Naive thymus-derived CD4-positive, alpha-beta T cell (primary cell): ENCODE measurements at regions of chr10 and their contacts with region 1.

Region 1: GRCh38 chr10:89086801-89087521 is 96.4 kb downstream of the FAS start:
- DNase-seq: no peak
- ATAC-seq: peak; percentile 67
- H3K4me3 ChIP-seq: no peak overlapping the region
- H3K4me3 Mint-ChIP-seq: peak overlapping the region in 1 of 10 donors; percentile 16
- H3K27ac ChIP-seq: no peak overlapping the region
- H3K27ac Mint-ChIP-seq: peak overlapping the region in 1 of 9 donors; percentile 15
- H3K4me1 ChIP-seq: peaks cover 6 to 9% of the 10 kb centered on the region in 2 donors
- H3K4me1 Mint-ChIP-seq: peaks cover 0 to 15% (median 0%) of the 10 kb centered on the region in 7 donors
- H3K27me3 ChIP-seq: no peaks in the 10 kb centered on the region
- H3K27me3 Mint-ChIP-seq: peaks cover 0 to 8% (median 0%) of the 10 kb centered on the region in 5 donors

Region 2: GRCh38 chr10:88582806-88583583 is 504.0 kb before region 1 on chr10 and contains the start of gene RNLS:
- CTCF ChIA-PET with region 1: no interaction called
- POLR2A ChIA-PET with region 1: no interaction called
- intact Hi-C with region 1: loop called in 1 of 2 experiments (anchors 10 kb)
- DNase-seq: peak; percentile 46 to 66 (median 62)
- ATAC-seq: peak; percentile 90
- H3K4me3 ChIP-seq: peak within 1 kb of the TSS; percentile 90
- H3K4me3 Mint-ChIP-seq: peak within 1 kb of the TSS; percentile 88 to 95 (median 90)
- H3K27ac ChIP-seq: peak within 1 kb of the TSS; percentile 80
- H3K27ac Mint-ChIP-seq: peak within 1 kb of the TSS; percentile 84 to 97 (median 91)
- H3K4me1 ChIP-seq: peaks cover 6 to 8% of the 10 kb centered on the region in 2 donors
- H3K4me1 Mint-ChIP-seq: peaks cover 8 to 16% (median 12%) of the 10 kb centered on the region in 7 donors
- H3K27me3 ChIP-seq: no peaks in the 10 kb centered on the region
- H3K27me3 Mint-ChIP-seq: peaks cover 0 to 19% (median 4%) of the 10 kb centered on the region in 5 donors
- total RNA-seq, gene RNLS: 1.5 to 3.6 (median 2.9) TPM

Region 3: GRCh38 chr10:88820748-88821389 is 266.1 kb before region 1 on chr10:
- CTCF ChIA-PET with region 1: no interaction called
- POLR2A ChIA-PET with region 1: no interaction called
- intact Hi-C with region 1: loop called in 1 of 2 experiments (anchors 10 kb)
- DNase-seq: peak in 1 of 9 donors; percentile 13
- ATAC-seq: no peak
- H3K4me3 ChIP-seq: no peak overlapping the region
- H3K4me3 Mint-ChIP-seq: peak overlapping the region in 2 of 10 donors; percentile 13 to 16
- H3K27ac ChIP-seq: no peak overlapping the region
- H3K27ac Mint-ChIP-seq: peak overlapping the region in 4 of 9 donors; percentile 19 to 86 (median 44)
- H3K4me1 ChIP-seq: peaks cover 24 to 34% of the 10 kb centered on the region in 2 donors
- H3K4me1 Mint-ChIP-seq: peaks cover 20 to 66% (median 51%) of the 10 kb centered on the region in 7 donors
- H3K27me3 ChIP-seq: no peaks in the 10 kb centered on the region
- H3K27me3 Mint-ChIP-seq: peaks cover 0 to 4% (median 0%) of the 10 kb centered on the region in 5 donors

Region 4: GRCh38 chr10:88979153-88979562 is 107.8 kb before region 1 on chr10:
- CTCF ChIA-PET with region 1: no interaction called
- POLR2A ChIA-PET with region 1: no interaction called
- intact Hi-C with region 1: loop called in 1 of 2 experiments (anchors 1 kb)
- DNase-seq: no peak
- ATAC-seq: no peak
- H3K4me3 ChIP-seq: no peak overlapping the region
- H3K4me3 Mint-ChIP-seq: no peak overlapping the region
- H3K27ac ChIP-seq: no peak overlapping the region
- H3K27ac Mint-ChIP-seq: peak overlapping the region in 2 of 9 donors; percentile 32 to 33
- H3K4me1 ChIP-seq: peaks cover 7 to 12% of the 10 kb centered on the region in 2 donors
- H3K4me1 Mint-ChIP-seq: peaks cover 6 to 29% (median 18%) of the 10 kb centered on the region in 7 donors
- H3K27me3 ChIP-seq: no peaks in the 10 kb centered on the region
- H3K27me3 Mint-ChIP-seq: peaks cover 0 to 3% (median 0%) of the 10 kb centered on the region in 5 donors

Region 5: GRCh38 chr10:89029785-89030437 is 57.0 kb before region 1 on chr10:
- CTCF ChIA-PET with region 1: interaction called, 3 read pairs
- POLR2A ChIA-PET with region 1: no interaction called
- intact Hi-C with region 1: loop called in 1 of 2 experiments (anchors 2 kb)
- DNase-seq: peak; percentile 37 to 68 (median 53)
- ATAC-seq: peak; percentile 85
- H3K4me3 ChIP-seq: no peak overlapping the region
- H3K4me3 Mint-ChIP-seq: peak overlapping the region in 1 of 10 donors; percentile 30
- H3K27ac ChIP-seq: no peak overlapping the region
- H3K27ac Mint-ChIP-seq: no peak overlapping the region
- H3K4me1 ChIP-seq: no peaks in the 10 kb centered on the region
- H3K4me1 Mint-ChIP-seq: peaks cover 0 to 31% (median 0%) of the 10 kb centered on the region in 7 donors
- H3K27me3 ChIP-seq: no peaks in the 10 kb centered on the region
- H3K27me3 Mint-ChIP-seq: no peaks in the 10 kb centered on the region

Region 6: DNA sequence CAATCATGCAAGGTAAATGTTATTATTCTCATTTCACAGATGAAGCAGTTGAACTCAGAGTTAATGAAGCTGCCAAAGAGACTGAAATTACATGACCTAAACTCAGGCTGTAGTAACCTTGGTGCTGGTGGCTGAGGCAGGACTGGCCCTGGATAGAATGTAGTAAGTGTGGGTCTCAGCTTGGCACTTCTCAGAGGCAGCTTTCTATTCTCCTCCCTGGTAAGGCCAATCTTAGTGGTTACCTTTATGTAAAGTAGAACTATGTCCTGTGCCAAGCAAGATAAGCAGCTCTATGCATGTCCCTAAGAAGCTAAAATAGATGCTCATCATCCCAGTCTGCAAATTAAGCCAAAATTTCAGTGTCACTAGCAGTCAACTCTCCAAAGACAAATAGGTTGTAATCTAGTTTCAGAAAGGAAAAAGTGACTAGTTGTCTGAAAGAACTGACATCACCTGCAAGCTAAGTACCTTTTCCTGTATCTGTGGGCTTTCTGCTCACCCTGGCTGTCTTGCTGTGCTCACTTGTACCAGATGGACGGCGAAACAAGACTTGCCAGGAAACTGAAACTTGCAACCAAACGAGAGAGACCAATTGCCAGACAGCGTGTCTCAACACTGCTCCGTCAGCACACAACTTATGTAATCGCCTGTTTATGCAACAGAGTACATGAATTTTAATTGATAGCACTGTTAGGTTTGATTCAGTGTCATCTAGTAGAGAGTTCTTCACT is 76.5 kb after region 1 on chr10:
- CTCF ChIA-PET with region 1: no interaction called
- POLR2A ChIA-PET with region 1: no interaction called
- intact Hi-C with region 1: loop called in 1 of 2 experiments (anchors 1 kb)
- DNase-seq: peak in 8 of 9 donors; percentile 10 to 57 (median 44)
- ATAC-seq: peak; percentile 88
- H3K4me3 ChIP-seq: peak overlapping the region; percentile 39
- H3K4me3 Mint-ChIP-seq: peak overlapping the region; percentile 26 to 83 (median 80)
- H3K27ac ChIP-seq: no peak overlapping the region
- H3K27ac Mint-ChIP-seq: peak overlapping the region; percentile 40 to 86 (median 74)
- H3K4me1 ChIP-seq: peaks cover 5 to 8% of the 10 kb centered on the region in 2 donors
- H3K4me1 Mint-ChIP-seq: peaks cover 7 to 29% (median 18%) of the 10 kb centered on the region in 7 donors
- H3K27me3 ChIP-seq: no peaks in the 10 kb centered on the region
- H3K27me3 Mint-ChIP-seq: peaks cover 4 to 56% (median 5%) of the 10 kb centered on the region in 5 donors